IMR-90 (cell line): ENCODE measurements at regions of chr5 and their contacts with region 1.

Region 1: DNA sequence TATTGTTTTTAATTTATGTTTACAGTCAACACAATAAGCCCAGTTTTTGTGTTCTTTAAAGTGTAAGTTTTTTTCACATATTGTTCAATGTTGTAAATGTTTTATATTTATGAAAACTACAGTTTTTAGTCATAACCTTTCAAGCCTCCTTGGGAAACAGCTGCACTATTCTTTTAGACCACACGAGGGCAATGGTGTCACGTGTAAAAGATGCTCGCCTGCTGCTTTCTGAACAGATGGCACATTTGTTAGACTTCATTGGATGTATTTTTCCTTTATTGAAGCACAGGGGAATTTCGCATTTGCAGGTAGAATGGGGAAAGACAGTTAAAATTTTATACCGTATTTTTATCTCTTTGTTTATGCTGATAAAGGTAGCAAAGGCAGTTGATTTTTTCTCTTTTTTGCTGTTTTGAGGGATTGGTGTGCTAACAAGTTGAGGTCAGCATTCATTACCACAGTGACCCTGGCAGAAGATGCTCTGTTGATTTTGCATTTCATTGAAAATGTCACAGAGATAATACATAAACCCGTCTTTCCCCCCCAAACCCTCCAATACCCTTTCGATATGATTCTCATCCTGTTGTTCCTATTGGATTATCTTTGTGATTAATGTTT is 59.0 kb downstream of the MAT2B start:
- DNase-seq: peak; percentile 69
- ATAC-seq: peak; percentile 68
- H3K4me3 ChIP-seq: no peak overlapping the region
- H3K27ac ChIP-seq: no peak overlapping the region
- H3K4me1 ChIP-seq: peaks cover 5% of the 10 kb centered on the region
- H3K27me3 ChIP-seq: no peaks in the 10 kb centered on the region
- CTCF ChIP-seq: peak; percentile 89
- POLR2A ChIP-seq: no peak
- RAD21 ChIP-seq: peak; percentile 91

Region 2: GRCh38 chr5:165209086-165209727 is 1644.8 kb after region 1 on chr5:
- CTCF ChIA-PET with region 1: interaction called, 3 read pairs
- POLR2A ChIA-PET with region 1: no interaction called
- dilution Hi-C with region 1: no loop called
- in situ Hi-C with region 1: loop called (anchors 5 kb)
- intact Hi-C with region 1: loop called (anchors 5 kb)
- DNase-seq: peak; percentile 37
- ATAC-seq: no peak
- H3K4me3 ChIP-seq: no peak overlapping the region
- H3K27ac ChIP-seq: no peak overlapping the region
- H3K4me1 ChIP-seq: no peaks in the 10 kb centered on the region
- H3K27me3 ChIP-seq: no peaks in the 10 kb centered on the region
- CTCF ChIP-seq: peak; percentile 61
- POLR2A ChIP-seq: no peak
- RAD21 ChIP-seq: peak; percentile 37